ENCODE measurements at regions of chr2 and their contacts with region 1.

Region 1: GRCh38 chr2:120343433-120344105 is 2.4 kb upstream of the INHBB start:
- DNase-seq: no peak
- H3K4me3 ChIP-seq: no peak overlapping the region
- H3K27me3 ChIP-seq: peaks cover 30% of the 10 kb centered on the region
- CTCF ChIP-seq: peak; percentile 83

Region 2: DNA sequence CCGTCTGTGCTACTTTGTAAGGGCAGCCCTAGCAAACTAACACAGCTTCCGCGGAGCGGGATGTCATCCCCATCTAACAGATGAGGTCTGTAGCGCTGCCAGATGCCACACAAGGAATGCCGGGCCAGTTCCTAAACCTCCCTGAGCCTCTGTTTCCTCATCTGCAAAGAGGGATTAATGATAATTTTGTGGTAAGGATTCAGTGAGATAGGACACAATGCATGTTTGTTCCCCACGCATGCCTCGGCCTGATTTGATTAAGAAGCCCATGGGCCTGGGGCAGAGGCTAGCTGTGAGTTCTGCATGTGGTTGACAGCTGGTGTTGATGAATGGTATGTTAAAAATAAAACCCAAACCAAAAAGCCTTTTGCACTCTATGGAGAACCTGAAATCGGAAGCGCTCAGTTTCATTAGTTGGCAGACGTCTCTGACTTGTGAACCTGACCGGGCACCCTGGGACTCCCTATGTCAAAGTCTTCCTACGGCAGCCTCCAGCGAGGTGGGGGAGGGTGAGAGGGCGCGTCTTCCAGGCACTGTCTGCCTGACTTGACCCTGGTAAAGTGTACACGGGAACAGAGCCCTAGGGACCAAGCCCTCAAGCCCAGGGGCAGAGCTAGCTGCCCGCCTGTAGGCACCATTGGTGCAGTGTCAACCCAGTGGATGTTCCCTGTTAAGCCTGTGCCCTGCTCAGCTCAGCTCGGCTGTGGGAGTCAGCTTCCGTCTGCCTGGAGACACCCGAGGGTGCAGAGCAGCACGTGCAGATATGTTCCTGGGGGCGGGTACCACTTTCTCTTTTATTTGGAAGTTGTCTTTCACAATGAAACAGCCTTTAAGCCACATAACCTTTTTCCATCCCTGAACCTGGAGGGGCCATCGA is 12.4 kb before region 1 on chr2:
- CTCF ChIA-PET with region 1: interaction called, 11 read pairs
- POLR2A ChIA-PET with region 1: no interaction called
- DNase-seq: no peak
- H3K4me3 ChIP-seq: no peak overlapping the region
- H3K27me3 ChIP-seq: peaks cover 41% of the 10 kb centered on the region
- CTCF ChIP-seq: no peak

Region 3: DNA sequence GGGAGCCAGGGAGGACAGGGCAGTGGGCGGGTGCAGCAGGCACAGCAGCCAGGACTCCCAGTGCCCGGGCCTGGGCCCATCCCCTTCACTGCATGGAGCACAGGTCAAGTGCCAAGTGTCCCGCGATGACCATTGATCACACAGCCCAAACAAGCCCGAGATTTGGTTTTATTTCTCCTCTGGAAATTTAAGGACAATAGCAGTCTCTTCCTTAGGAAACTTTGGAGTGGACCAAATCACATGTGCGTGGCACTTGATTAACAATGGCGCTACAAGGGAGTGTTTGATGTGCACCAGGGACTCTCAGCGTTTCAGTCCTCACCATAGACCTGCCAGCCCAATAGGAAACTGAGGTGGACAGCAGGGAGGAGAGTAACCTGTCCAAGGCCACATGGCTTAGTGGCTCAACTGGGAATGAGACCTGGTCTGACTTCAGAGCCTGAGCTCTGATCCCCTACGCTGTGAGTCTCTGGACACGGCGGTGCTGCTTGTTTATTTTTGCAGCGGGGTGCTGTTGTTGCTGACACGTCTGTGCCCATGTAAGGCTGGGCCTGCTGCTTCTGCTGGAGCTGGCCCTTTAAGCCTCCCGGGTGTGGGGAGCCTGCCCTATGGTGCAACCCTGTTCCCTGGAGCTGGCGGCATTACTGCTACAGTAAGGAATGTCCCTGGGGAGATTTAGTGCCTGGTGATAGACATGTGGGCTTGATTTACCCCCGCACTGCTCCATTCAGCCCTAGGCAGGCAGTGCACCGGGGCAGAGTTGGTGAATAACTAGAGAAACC is 196.6 kb after region 1 on chr2:
- CTCF ChIA-PET with region 1: interaction called, 10 read pairs
- POLR2A ChIA-PET with region 1: no interaction called
- DNase-seq: peak; percentile 78
- H3K4me3 ChIP-seq: no peak overlapping the region
- H3K27me3 ChIP-seq: no peaks in the 10 kb centered on the region
- CTCF ChIP-seq: no peak

Region 4: DNA sequence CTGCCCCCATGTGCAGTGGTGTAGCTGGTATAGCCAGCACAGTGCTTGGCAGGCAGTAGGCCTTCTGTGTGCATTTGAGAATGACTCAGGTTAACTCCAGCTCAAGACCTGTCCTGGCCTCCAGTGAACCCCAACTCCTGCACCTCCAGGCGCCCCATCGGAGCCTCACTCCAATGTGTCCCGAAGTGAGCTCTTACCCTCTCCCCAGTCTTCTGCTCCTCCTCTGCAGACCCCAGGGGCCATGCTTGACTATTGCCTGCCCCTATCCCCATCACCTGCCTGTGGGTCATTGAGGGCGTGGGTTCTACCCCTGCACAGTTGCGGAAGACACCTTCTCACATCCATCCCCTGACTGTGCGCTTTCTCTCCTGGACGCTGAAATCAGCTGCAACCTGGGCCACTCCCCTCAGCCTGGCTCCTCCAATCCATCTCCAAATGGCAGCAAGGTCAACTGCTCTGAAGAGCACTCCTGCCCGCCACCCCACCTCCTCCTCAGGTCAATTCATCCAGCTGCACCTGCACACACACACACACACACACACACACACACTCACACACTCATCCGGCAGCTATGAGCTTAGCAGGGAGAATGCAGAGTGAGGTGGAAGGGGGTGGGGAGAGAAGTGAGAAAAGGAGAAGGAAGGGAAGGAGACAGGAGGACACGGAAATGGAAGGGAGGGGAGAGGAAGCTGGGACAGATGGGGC is 261.8 kb after region 1 on chr2:
- CTCF ChIA-PET with region 1: interaction called, 11 read pairs
- POLR2A ChIA-PET with region 1: no interaction called
- DNase-seq: no peak
- H3K4me3 ChIP-seq: no peak overlapping the region
- H3K27me3 ChIP-seq: no peaks in the 10 kb centered on the region
- CTCF ChIP-seq: no peak

Region 5: DNA sequence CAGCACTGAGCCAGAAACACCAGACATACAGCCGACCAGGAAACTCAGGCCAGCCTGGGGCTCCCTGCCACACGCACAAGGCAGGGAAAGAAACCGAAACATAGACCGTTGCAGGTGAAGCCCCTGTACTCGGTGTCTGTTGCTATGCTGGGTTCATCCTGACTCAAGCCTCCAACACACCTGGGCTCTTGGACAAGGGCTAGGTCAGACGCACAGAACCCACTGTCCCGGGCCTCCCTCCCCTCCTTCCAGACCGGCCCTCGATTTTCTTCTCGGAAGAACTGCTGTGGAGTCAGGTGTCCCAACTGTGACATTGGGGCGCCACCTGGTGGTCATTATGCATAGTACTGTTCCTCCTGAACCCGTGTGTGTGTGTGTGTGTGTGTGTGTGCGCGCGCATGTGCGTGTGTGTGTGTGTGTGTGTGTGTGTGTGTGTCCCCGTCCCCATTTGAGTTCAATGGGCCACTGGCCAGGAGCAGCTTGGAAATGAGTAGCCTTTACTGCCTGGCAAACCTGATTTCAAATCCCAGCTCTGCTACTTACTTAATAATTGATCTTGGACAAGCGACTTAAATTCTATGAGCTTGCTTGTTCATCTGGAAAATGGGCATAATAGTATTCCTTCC is 336.7 kb after region 1 on chr2:
- CTCF ChIA-PET with region 1: interaction called, 137 read pairs
- POLR2A ChIA-PET with region 1: interaction called, 3 read pairs
- DNase-seq: no peak
- H3K4me3 ChIP-seq: no peak overlapping the region
- H3K27me3 ChIP-seq: no peaks in the 10 kb centered on the region; the same call in 1 of the 2 replicates
- CTCF ChIP-seq: peak; percentile 66